ENCODE measurements at regions of chr7 and their contacts with region 1.

Region 1: GRCh38 chr7:28096713-28097112 is 83.9 kb downstream of the JAZF1 start:
- DNase-seq: peak; percentile 65
- CTCF ChIP-seq: peak; percentile 73

Region 2: DNA sequence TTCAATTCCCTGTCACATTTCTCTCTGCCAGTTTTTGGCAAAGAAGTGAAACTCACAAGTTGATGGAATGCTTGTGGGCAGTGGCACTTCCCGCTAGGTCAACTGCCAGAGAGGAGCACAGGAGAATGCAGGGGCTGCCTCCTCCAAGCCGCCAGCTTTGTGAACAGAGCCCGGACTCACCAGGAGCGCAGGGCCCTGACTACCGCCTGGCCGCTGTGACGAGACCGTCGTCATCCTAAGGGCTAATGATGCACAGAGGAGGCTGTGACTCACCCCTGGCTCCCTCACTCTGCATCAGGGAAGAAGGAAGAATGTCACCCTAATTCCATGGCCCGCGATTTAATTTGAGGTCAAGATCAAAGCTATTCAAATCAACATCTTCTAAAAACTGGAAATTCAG is 232.8 kb before region 1 on chr7:
- CTCF ChIA-PET with region 1: no interaction called
- POLR2A ChIA-PET with region 1: no interaction called
- DNase-seq: no peak
- CTCF ChIP-seq: no peak

Region 3: DNA sequence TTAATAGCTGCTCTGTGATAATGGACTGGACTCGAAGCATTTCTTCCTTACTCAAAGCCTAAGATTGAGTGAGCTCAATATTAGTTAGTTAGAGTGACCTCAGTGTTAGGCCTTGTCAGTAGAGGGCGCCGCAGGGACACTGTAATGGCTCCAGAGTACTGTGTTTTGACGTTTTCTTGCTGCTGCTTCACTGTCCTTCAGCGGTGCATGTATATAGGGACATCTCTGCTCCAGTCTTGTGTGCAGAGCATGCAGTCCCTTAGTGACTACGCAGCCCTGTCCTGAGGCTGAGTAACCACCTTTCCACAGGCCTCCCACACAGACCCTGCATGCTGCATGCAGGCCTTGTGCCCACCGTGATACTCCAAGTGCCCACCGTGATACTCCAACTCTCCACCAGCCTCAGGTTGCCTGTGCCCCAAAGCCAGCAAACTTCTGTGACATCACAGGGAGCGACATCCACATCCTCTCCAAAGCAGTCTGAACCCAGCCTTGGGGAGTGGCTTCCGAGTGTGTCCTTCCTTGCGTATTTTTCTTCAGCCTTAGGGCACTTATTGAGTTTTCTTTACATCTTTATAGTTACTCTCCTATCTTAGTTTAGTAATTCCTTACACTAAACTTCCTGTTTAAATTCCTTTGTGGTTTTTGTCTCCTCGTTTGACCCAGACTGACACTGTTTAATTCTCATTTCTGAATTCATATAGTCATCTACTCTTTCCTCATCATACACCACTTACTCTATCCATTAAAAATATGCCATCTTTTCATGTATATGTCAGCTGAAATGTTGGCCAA is 34.3 kb before region 1 on chr7:
- CTCF ChIA-PET with region 1: interaction called, 73 read pairs
- POLR2A ChIA-PET with region 1: no interaction called
- DNase-seq: peak; percentile 48
- CTCF ChIP-seq: peak; percentile 74

Region 4: DNA sequence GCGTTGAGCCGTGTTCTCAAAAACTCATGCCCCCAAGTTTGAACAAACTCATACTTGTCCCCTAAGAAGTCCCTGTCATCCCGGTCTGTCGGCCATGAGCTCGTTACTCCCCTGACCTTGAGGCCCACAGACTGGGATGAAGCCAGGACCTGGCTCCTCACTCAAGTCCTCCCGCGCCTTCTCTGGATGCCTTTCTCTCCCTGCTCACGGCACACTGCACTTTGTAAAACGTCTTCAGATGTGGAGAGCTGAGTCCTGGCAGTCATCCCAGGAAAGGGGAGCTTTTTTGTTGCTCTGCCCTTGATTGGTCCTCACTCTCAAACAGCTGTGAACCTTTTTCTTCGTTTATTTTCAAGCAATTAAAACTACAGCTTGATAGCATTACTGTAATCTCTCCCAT is 26.9 kb before region 1 on chr7:
- CTCF ChIA-PET with region 1: interaction called, 38 read pairs
- POLR2A ChIA-PET with region 1: no interaction called
- DNase-seq: no peak
- CTCF ChIP-seq: no peak

Region 5: DNA sequence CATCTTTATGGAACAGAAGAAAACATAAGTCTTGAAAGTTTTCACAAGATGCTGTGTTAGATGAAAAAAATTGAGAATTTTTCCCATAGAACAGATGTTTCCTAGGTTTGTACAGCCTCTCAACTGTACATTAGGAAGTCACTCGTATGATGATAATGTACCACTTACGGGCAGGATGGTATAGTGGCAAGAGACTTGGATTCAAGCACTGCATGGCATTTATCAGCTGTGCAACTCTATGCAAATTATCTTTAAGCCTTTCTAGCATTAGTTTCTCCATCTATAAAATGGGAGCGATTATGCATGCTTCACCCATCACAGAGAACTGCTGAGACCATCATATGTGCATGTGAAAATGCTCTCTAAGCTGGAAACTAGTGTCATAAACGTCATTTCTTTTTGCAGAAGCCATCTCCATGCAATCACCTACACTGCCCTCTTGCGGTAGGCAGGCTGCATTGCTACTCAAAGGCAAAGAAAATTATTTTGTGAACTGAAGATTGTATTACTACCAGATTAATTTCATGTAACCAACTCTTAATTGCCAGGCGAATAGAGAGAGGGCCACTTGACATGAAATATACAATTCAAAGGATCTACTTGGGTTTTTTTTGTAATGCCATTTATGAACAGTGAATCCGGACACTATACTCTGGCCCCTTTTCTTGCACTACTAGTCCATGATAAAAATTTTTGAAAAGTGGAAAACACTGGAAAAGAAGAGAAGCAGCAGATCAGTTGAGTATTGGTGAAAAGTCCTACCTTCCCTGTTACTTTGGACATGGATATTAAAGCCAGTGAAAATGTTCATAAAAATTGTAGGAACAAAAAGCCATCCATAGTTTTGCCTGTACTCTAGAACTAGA is 18.4 kb before region 1 on chr7:
- CTCF ChIA-PET with region 1: interaction called, 38 read pairs
- POLR2A ChIA-PET with region 1: no interaction called
- DNase-seq: peak; percentile 46
- CTCF ChIP-seq: peak; percentile 99

Region 6: DNA sequence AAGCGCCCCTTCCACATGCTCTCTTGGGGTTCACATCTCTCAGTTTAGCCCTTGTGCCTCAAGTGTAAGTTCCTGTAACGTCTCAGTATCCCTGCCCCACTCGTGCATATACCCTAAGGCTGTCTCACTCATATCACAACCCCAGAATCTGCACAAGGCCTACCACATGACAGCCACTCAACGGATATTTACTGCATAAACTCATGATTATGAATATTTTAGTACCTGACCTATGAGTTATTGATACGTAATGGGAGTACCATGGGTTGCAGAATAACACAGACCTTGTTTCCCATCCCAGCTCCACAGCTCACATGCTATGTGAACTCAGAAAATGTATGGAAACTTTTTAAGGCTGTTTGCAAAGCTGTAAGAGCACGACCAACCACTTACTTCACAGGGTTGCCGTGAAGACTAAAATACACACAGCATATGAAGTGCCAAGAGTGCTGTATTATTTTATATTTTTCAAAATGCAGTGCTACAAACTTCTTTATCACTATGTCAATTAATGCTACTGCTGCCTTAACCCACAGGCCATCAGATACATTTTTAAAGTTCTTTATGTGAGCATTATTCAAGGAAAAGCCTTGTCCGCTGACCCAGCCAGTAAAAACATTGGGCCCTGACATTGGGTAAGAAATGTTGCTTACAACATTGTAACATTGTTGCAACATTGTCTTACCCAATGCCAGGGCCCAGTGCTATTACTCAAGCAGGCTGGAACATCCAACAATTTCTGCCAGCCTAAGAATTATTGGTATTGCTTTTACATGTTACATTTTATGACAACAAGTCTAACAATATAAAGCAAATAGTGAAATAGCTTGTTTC is 13.3 kb before region 1 on chr7:
- CTCF ChIA-PET with region 1: interaction called, 38 read pairs
- POLR2A ChIA-PET with region 1: no interaction called
- DNase-seq: no peak
- CTCF ChIP-seq: no peak

Measured in GM10248 (cell line).